PC-3 (cell line): ENCODE measurements at regions of chr13 and their contacts with region 1.

Region 1: GRCh38 chr13:35866801-35867200 is 264.4 kb downstream of the DCLK1 start:
- DNase-seq: no peak
- ATAC-seq: no peak
- H3K4me3 ChIP-seq: no peak overlapping the region
- H3K27ac ChIP-seq: no peak overlapping the region
- H3K4me1 ChIP-seq: no peaks in the 10 kb centered on the region
- H3K27me3 ChIP-seq: no peaks in the 10 kb centered on the region
- CTCF ChIP-seq: no peak

Region 2: DNA sequence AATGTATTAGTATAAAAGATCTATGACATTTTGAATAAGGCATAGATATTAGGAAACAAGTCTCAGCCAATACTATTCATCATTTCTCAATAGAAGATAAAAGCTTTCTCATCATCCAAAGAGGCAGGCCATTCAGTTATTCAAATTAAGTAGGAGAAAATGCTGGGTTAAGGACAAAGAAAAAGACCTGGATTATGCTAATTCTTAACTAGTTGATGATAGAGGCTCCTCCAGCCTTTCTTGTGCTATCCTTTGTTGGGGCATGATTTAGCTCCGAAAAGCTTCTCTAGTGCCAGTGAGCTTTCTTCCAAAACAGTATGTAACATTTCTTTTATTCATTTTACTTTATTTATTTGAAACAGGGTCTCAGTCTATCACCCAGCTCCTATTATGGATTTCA is 41.4 kb after region 1 on chr13:
- CTCF ChIA-PET with region 1: no interaction called
- POLR2A ChIA-PET with region 1: interaction called, 26 read pairs
- intact Hi-C with region 1: no loop called
- DNase-seq: no peak
- ATAC-seq: no peak
- H3K4me3 ChIP-seq: no peak overlapping the region
- H3K27ac ChIP-seq: no peak overlapping the region
- H3K4me1 ChIP-seq: no peaks in the 10 kb centered on the region
- H3K27me3 ChIP-seq: no peaks in the 10 kb centered on the region
- CTCF ChIP-seq: no peak